CD8-positive, alpha-beta T cell (primary cell): ENCODE measurements at regions of chrX and their contacts with region 1.

Region 1: DNA sequence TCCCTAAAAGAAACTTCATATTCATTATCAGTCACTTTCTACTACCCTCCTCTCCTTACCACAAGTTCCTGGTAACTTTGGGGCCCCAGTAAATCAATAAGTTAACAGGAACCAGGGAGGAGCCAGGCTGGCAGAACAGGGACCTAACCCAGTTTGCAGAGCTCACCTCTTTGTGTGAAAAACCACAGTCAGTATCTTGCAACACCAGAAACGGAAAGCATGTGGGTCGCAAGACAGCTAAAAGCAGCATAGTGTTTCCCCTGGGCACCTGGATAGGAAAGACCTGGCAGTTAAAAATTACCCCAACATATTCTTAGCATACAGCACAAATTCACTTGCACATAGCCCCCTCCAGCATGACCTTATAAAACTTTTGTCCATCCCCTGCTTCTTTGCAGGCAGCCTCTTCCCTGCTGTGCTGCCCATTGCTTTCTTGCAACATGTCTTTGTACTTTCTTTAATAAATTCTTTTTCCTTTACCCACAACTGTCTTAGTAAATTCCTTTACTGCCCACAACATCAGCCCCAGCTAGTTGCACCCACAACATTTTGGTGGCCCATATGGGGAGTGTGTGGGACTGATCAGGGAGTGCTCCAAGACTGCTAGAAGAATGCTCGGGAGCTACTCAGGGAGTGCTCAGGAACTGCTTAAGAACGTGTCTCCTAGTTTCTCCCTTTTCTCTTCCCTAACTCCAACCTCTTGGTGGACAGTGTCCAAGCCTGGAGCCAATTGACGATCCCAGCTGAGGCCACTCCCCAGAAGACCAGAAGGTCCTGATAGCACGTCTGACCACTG is 83.4 kb downstream of the MSN start:
- DNase-seq: peak in 7 of 9 experiments; percentile 9 to 72 (median 18)
- ATAC-seq: peak; percentile 79
- H3K4me3 ChIP-seq: peak overlapping the region in 1 of 2 experiments; percentile 37
- H3K4me3 Mint-ChIP-seq: peak overlapping the region; percentile 61
- H3K27ac ChIP-seq: no peak overlapping the region
- H3K27ac Mint-ChIP-seq: peak overlapping the region; percentile 76
- H3K4me1 ChIP-seq: peaks cover 25% of the 10 kb centered on the region
- H3K4me1 Mint-ChIP-seq: peaks cover 58% of the 10 kb centered on the region
- H3K27me3 ChIP-seq: no peaks in the 10 kb centered on the region
- H3K27me3 Mint-ChIP-seq: no peaks in the 10 kb centered on the region
- CTCF ChIP-seq: no peak

Region 2: GRCh38 chrX:65846974-65847373 is 96.1 kb after region 1 on chrX:
- CTCF ChIA-PET with region 1: no interaction called
- POLR2A ChIA-PET with region 1: no interaction called
- intact Hi-C with region 1: no loop called
- DNase-seq: no peak
- ATAC-seq: no peak
- H3K4me3 ChIP-seq: no peak overlapping the region
- H3K4me3 Mint-ChIP-seq: no peak overlapping the region
- H3K27ac ChIP-seq: no peak overlapping the region
- H3K27ac Mint-ChIP-seq: no peak overlapping the region
- H3K4me1 ChIP-seq: no peaks in the 10 kb centered on the region
- H3K4me1 Mint-ChIP-seq: no peaks in the 10 kb centered on the region
- H3K27me3 ChIP-seq: no peaks in the 10 kb centered on the region
- H3K27me3 Mint-ChIP-seq: no peaks in the 10 kb centered on the region
- CTCF ChIP-seq: no peak

Region 3: GRCh38 chrX:66110112-66110511 is 359.2 kb after region 1 on chrX:
- CTCF ChIA-PET with region 1: no interaction called
- POLR2A ChIA-PET with region 1: no interaction called
- intact Hi-C with region 1: loop called in 1 of 2 experiments (anchors 10 kb)
- DNase-seq: peak in 2 of 9 experiments; percentile 32 to 50
- ATAC-seq: peak; percentile 34
- H3K4me3 ChIP-seq: no peak overlapping the region
- H3K4me3 Mint-ChIP-seq: no peak overlapping the region
- H3K27ac ChIP-seq: no peak overlapping the region
- H3K27ac Mint-ChIP-seq: no peak overlapping the region
- H3K4me1 ChIP-seq: no peaks in the 10 kb centered on the region
- H3K4me1 Mint-ChIP-seq: peaks cover 2% of the 10 kb centered on the region
- H3K27me3 ChIP-seq: no peaks in the 10 kb centered on the region
- H3K27me3 Mint-ChIP-seq: no peaks in the 10 kb centered on the region
- CTCF ChIP-seq: peak; percentile 33